Thyroid gland (tissue), 4 donors: ENCODE measurements at regions of chr20 and their contacts with region 1.

Region 1: DNA sequence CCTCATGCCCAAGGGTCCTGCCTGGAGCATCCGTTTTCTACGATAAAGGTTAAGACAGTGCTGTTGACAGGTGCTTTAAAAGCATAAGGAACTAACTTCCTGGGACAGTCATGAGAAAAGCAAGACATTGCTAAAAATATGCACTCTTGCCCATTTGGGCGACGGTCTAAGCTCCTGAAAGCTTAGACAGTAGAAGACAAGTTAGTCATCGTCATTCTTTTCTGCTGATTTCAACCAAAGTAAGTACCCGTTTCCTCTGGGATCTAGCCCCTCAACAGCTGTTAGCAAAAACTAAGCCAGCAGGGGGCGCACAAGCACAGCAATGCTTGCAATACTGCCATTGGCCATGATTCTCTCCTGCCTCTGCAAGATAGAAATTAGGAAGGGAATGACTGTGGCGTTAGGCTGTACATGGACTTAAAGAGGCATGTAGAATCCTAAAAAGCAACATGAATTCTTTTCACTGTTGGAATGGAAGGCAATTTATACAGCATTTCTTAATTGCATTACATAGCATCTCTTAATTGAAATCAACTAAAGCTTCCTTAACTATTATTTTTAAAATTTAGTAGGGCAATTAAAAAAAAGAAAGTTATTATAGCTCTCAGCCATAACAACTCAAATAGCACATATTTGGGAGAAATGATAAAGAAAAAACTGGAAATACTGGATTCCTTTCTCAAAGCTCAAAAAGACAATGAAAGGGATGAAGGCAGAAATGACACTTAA is 147.8 kb upstream of the RALGAPA2 start:
- DNase-seq: peak; percentile 89 to 95
- H3K4me3 ChIP-seq: no peak overlapping the region
- H3K27ac ChIP-seq: no peak overlapping the region
- H3K4me1 ChIP-seq: no peaks in the 10 kb centered on the region
- H3K27me3 ChIP-seq: no peaks in the 10 kb centered on the region
- CTCF ChIP-seq: peak; percentile 73 to 99 (median 95)
- POLR2A ChIP-seq: no peak

Region 2: DNA sequence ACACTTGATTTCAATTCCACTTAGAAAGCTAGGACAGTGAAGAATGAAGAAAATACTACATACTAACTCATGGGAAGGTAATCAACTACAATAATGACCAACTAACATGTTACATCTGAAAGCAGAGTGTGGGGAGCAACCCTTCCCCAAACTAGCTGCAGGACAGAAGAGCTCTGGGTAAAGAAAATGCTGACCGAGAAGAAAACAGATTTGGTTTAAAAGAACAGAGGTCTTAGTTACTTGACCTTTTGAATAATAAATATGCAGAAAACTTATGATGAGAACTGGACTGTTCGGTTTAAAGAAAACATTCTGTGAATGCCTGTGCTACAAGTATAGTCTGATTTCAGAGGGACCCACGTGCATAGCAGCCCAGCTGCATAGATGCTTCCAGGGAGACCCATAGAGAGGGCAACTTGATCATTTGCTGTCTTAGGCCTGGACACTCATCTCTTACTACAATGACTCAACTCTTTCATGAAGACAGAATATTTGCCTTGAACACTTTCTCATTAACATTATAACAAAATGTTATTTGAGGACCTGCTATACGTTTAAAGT is 201.3 kb before region 1 on chr20:
- intact Hi-C with region 1: no loop called
- DNase-seq: no peak
- H3K4me3 ChIP-seq: no peak overlapping the region
- H3K27ac ChIP-seq: no peak overlapping the region
- H3K4me1 ChIP-seq: peaks cover 13% of the 10 kb centered on the region in 2 donors
- H3K27me3 ChIP-seq: no peaks in the 10 kb centered on the region
- CTCF ChIP-seq: no peak
- POLR2A ChIP-seq: no peak

Region 3: GRCh38 chr20:20712474-20713243 is 147.6 kb before region 1 on chr20 and contains the start of gene RALGAPA2:
- intact Hi-C with region 1: no loop called
- DNase-seq: peak; percentile 99
- H3K4me3 ChIP-seq: peak within 1 kb of the TSS; percentile 43 to 92 (median 88)
- H3K27ac ChIP-seq: peak within 1 kb of the TSS; percentile 52 to 92 (median 87)
- H3K4me1 ChIP-seq: peaks cover 18 to 20% of the 10 kb centered on the region in 2 donors
- H3K27me3 ChIP-seq: no peaks in the 10 kb centered on the region
- CTCF ChIP-seq: peak in 1 of 6 experiments; percentile 37
- POLR2A ChIP-seq: peak; percentile 88 to 94
- total RNA-seq, gene RALGAPA2: 89.7 to 126 (median 97.8) TPM

Region 4: GRCh38 chr20:21235484-21236445 is 375.5 kb after region 1 on chr20:
- intact Hi-C with region 1: loop called (anchors 5 kb)
- DNase-seq: peak; percentile 68 to 76
- H3K4me3 ChIP-seq: no peak overlapping the region
- H3K27ac ChIP-seq: peak overlapping the region; percentile 13 to 77 (median 49)
- H3K4me1 ChIP-seq: peaks cover 25 to 35% of the 10 kb centered on the region in 2 donors
- H3K27me3 ChIP-seq: no peaks in the 10 kb centered on the region
- CTCF ChIP-seq: peak; percentile 28 to 74 (median 65)
- POLR2A ChIP-seq: no peak

Region 5: GRCh38 chr20:21503345-21503744 is 643.1 kb after region 1 on chr20:
- intact Hi-C with region 1: loop called (anchors 5 kb)
- DNase-seq: no peak
- H3K4me3 ChIP-seq: no peak overlapping the region
- H3K27ac ChIP-seq: no peak overlapping the region
- H3K4me1 ChIP-seq: peaks cover 9 to 15% of the 10 kb centered on the region in 2 donors
- H3K27me3 ChIP-seq: peaks cover 29% of the 10 kb centered on the region
- CTCF ChIP-seq: no peak
- POLR2A ChIP-seq: no peak